ENCODE measurements at regions of chr2 and their contacts with region 1.

Region 1: GRCh38 chr2:185291035-185291647 is 447.5 kb upstream of the FSIP2 start:
- DNase-seq: peak; percentile 33
- H3K4me3 Mint-ChIP-seq: no peak overlapping the region
- H3K27ac Mint-ChIP-seq: no peak overlapping the region
- H3K4me1 Mint-ChIP-seq: no peaks in the 10 kb centered on the region
- H3K27me3 Mint-ChIP-seq: no peaks in the 10 kb centered on the region

Region 2: GRCh38 chr2:185738679-185739472 is 447.7 kb after region 1 on chr2 and contains the start of gene FSIP2:
- CTCF ChIA-PET with region 1: no interaction called
- intact Hi-C with region 1: loop called (anchors 2 kb)
- DNase-seq: peak; percentile 44
- H3K4me3 Mint-ChIP-seq: no peak within 1 kb of the TSS
- H3K27ac Mint-ChIP-seq: no peak within 1 kb of the TSS
- H3K4me1 Mint-ChIP-seq: no peaks in the 10 kb centered on the region
- H3K27me3 Mint-ChIP-seq: peaks cover 31% of the 10 kb centered on the region
- total RNA-seq, gene FSIP2: 0.14 TPM in 1 of 2 experiments, not detected in the other

Region 3: GRCh38 chr2:185828326-185828725 is 537.2 kb after region 1 on chr2:
- CTCF ChIA-PET with region 1: no interaction called
- intact Hi-C with region 1: no loop called
- DNase-seq: no peak
- H3K4me3 Mint-ChIP-seq: no peak overlapping the region
- H3K27ac Mint-ChIP-seq: no peak overlapping the region
- H3K4me1 Mint-ChIP-seq: no peaks in the 10 kb centered on the region
- H3K27me3 Mint-ChIP-seq: no peaks in the 10 kb centered on the region

Region 4: DNA sequence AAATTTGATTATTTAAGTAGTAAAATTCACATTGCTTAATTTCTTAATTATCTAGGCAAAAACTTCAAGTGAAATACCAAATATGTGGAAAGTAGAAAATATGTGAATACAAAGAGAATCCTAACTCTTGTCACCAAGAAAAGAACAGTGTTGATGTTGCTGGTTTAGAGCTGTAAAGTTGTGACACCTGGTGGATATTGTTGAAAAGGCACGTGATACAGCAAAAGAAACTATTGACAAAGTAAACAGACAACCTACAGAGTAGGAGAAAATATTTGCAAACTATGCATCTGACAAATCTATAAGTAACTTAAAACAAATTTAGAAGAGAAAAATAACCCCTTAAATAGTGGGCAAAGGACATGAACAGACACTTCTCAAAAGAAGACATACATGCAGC is 1169.3 kb after region 1 on chr2:
- CTCF ChIA-PET with region 1: no interaction called
- intact Hi-C with region 1: loop called (anchors 2 kb)
- DNase-seq: no peak
- H3K4me3 Mint-ChIP-seq: no peak overlapping the region
- H3K27ac Mint-ChIP-seq: no peak overlapping the region
- H3K4me1 Mint-ChIP-seq: peaks cover 6% of the 10 kb centered on the region
- H3K27me3 Mint-ChIP-seq: no peaks in the 10 kb centered on the region